Endothelial cell of umbilical vein (primary cell): ENCODE measurements at regions of chr13 and their contacts with region 1.

Region 1: DNA sequence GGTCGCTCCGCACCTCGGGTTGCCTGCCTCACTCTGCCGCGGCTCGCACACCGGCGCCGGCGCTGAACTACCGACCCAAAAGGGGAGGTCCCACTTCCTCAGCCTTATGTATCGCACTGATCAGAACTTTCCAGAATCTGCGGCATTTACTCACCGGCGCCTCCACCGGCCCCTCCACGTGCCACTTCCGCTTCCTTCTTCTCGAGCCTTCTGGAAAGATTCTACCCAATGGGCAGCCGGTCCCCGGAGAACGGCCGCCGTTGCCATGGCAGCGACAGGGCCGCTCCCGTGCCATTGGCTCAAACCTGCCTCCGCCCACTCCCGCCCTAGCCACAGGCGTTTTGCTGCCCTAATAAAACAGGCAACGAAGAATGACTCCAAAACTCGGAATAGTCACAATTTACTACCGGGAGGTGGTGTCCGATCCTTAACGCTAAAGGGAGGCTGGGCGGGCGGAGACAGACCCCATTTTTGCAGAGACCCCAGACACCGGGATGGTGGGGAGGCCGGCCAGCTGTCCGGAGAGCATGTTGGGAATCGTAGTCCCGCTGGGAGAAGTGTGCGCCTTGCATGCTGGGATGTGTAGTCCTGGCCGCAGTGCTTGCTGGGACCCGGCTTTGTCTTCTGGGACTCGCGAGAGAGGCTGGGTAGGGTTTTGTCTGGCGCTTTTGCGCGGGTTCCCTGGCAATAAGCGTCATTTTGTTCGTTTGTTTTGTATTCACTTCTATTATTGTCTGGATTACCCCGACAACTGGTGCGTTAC is at the start of gene HSPH1:
- DNase-seq: peak; percentile 98
- H3K4me3 ChIP-seq: peak within 1 kb of the TSS; percentile 88 to 99 (median 97)
- H3K27ac ChIP-seq: peak within 1 kb of the TSS; percentile 95
- H3K4me1 ChIP-seq: peaks cover 24% of the 10 kb centered on the region
- H3K27me3 ChIP-seq: no peaks in the 10 kb centered on the region
- CTCF ChIP-seq: peak in 1 of 2 donors; percentile 31
- POLR2A ChIP-seq: peak; percentile 81
- total RNA-seq, gene HSPH1: 98.1 and 124 TPM in 2 replicates

Region 2: DNA sequence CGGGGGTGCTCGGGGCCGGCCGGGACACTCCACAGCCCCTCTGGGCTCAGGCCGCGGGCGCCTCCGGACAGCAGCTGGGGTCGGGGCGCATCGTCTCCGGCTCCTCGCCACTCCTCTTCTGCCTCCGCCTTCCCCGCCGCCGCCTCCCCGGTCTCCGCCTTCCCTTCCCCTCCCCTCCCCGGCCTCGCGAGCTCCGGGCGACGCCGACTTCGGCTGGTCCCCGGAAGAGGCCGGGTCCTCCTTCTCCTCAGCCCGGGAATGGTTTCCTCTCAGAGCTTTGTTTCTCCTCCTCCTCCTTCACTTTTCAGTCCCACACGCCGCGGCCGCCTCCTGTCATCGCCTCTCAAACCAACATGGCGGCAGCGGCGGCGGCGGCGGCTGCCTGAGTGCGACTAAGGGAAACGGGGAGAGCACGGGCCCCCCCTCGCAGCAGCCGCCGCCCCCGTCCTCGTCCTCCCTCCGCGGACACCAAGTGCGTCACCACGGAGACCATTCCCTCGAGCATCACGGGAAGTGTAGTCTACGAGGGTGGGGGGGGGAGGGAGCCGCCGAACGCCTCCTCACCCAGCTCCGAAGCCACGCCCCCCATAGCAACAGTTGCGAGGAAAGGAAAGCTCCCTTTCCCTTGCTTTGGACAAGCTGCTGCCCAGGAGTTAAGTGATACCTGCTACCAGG is 1311.6 kb before region 1 on chr13 and contains the start of gene UBL3:
- CTCF ChIA-PET with region 1: no interaction called
- POLR2A ChIA-PET with region 1: no interaction called
- dilution Hi-C with region 1: no loop called
- intact Hi-C with region 1: loop called (anchors 10 kb)
- DNase-seq: peak; percentile 97
- H3K4me3 ChIP-seq: peak within 1 kb of the TSS; percentile 80 to 99 (median 98)
- H3K27ac ChIP-seq: peak within 1 kb of the TSS; percentile 83
- H3K4me1 ChIP-seq: peaks cover 22% of the 10 kb centered on the region
- H3K27me3 ChIP-seq: peaks cover 0 to 14% of the 10 kb centered on the region in 2 experiments
- CTCF ChIP-seq: no peak
- POLR2A ChIP-seq: peak; percentile 62
- total RNA-seq, gene UBL3: 11.1 and 11.8 TPM in 2 replicates

Region 3: DNA sequence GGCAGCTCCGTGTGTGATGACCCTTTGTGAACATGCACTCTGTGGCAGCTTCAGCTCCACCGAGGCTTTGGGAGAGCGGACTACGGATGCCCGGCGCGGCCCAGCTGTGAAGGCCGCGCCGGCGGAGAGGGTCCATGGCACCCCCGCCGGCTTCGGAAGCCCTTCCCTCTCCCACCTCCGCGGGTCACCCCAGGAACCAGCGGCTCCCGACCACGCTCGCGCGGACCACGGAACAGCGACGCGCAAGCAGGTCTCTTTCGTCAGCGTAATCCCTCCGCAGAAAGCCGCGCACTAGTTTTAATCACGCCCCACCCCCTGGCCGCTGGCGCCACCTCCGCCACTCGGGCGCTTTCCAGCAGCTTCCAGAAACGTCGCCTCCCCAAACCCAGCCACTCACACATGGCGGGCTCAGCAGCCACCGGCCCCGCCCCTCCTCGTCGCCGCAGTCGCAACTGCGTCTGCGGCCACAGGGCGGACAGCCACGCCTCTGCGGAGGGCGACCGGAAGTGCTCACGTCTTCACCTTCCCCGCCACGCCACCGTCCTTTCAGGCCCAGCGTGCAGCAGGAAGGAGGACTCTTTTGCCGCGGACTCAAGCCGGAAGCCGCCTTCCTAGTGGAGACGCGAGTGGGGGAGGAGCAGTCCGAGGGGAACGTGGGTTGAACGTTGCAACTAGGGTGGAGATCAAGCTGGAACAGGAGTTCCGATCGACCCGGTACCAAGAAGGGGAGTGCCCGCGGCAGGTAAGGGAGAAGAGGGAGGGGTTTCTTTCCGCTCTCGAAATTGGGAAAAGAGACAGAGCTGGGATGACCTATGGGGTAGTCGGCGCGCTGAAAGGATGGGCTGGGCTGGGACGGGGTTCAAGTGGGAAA is 544.5 kb before region 1 on chr13 and contains the start of gene USPL1:
- CTCF ChIA-PET with region 1: no interaction called
- POLR2A ChIA-PET with region 1: no interaction called
- dilution Hi-C with region 1: no loop called
- intact Hi-C with region 1: loop called (anchors 2 kb)
- DNase-seq: peak; percentile 100
- H3K4me3 ChIP-seq: peak within 1 kb of the TSS; percentile 83 to 95 (median 95)
- H3K27ac ChIP-seq: peak within 1 kb of the TSS; percentile 87
- H3K4me1 ChIP-seq: peaks cover 36% of the 10 kb centered on the region
- H3K27me3 ChIP-seq: no peaks in the 10 kb centered on the region
- CTCF ChIP-seq: peak in 1 of 2 donors; percentile 31
- POLR2A ChIP-seq: no peak
- total RNA-seq, gene USPL1: 18.8 and 21.0 TPM in 2 replicates

Region 4: DNA sequence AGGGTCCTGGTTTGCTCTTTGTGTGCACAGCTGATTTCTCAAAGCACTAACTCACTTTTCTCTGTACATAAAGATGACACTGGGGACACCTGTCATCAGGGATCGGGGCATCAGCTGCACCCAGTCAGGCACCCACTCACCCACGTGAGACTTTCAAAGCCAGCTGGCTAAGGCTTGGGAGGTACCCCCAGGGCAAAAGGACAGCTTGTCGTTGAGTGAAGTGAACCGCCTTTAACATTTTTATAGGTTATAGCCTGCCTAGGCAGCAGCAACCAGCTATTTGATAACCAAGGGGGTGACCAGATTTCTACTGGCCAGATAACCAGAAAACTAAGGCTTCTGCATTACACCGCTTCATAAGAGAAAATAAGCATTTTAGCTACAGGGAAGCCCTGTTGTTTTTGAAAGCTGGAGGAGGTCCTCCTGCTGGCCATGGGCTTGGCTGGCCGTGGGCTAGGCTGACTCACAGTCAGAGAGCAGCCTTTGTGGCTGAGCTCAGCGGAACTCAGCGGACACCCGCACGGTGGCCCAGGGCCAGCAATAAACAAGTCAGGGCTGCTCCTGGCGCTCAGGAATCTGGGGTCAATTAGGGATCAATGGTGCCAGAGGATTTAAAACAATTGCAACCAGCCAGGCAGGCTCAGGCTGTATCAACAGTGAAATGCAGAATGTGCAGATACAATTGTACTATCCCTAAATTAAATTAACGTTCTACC is 369.6 kb before region 1 on chr13:
- CTCF ChIA-PET with region 1: no interaction called
- POLR2A ChIA-PET with region 1: no interaction called
- dilution Hi-C with region 1: no loop called
- intact Hi-C with region 1: no loop called
- DNase-seq: peak; percentile 96
- H3K4me3 ChIP-seq: no peak overlapping the region
- H3K27ac ChIP-seq: peak overlapping the region; percentile 73
- H3K4me1 ChIP-seq: peaks cover 31% of the 10 kb centered on the region
- H3K27me3 ChIP-seq: no peaks in the 10 kb centered on the region
- CTCF ChIP-seq: peak; percentile 47 to 63
- POLR2A ChIP-seq: no peak

Region 5: DNA sequence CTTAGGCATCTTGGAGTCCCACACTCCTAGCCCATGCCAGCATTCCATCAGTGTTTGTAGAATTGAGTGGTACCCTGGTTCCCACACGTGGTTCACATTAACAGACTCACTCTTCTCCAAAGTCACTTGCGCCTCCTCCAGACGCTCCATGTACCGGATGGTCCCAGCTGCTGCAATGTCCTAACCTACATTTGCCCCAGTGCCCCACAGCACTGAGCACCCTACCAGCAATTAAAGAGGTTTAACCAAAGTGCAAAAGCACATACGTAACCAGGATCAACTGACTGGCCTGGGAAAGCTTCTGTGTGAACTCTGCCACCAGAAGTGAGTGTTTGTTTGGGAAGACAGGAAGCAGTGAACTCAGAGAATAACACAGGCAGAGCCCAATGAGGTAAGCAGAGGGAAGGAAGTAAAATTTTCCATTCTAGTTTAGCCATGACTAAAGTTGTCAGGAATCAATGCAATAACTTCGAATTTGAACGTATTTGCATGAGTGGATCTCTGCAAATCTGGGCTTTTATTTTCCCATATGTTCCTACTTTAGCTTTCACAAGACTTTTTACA is 263.2 kb before region 1 on chr13:
- CTCF ChIA-PET with region 1: no interaction called
- POLR2A ChIA-PET with region 1: no interaction called
- dilution Hi-C with region 1: no loop called
- intact Hi-C with region 1: loop called (anchors 2 kb)
- DNase-seq: peak; percentile 99
- H3K4me3 ChIP-seq: peak overlapping the region in 1 of 3 experiments; percentile 20
- H3K27ac ChIP-seq: peak overlapping the region; percentile 90
- H3K4me1 ChIP-seq: peaks cover 40% of the 10 kb centered on the region
- H3K27me3 ChIP-seq: no peaks in the 10 kb centered on the region
- CTCF ChIP-seq: no peak
- POLR2A ChIP-seq: no peak

Region 6: GRCh38 chr13:31110617-31111016 is 51.4 kb before region 1 on chr13:
- CTCF ChIA-PET with region 1: no interaction called
- POLR2A ChIA-PET with region 1: no interaction called
- dilution Hi-C with region 1: no loop called
- intact Hi-C with region 1: no loop called
- DNase-seq: no peak
- H3K4me3 ChIP-seq: no peak overlapping the region
- H3K27ac ChIP-seq: no peak overlapping the region
- H3K4me1 ChIP-seq: no peaks in the 10 kb centered on the region
- H3K27me3 ChIP-seq: peaks cover 10 to 32% of the 10 kb centered on the region in 2 experiments
- CTCF ChIP-seq: no peak
- POLR2A ChIP-seq: no peak

Region 7: DNA sequence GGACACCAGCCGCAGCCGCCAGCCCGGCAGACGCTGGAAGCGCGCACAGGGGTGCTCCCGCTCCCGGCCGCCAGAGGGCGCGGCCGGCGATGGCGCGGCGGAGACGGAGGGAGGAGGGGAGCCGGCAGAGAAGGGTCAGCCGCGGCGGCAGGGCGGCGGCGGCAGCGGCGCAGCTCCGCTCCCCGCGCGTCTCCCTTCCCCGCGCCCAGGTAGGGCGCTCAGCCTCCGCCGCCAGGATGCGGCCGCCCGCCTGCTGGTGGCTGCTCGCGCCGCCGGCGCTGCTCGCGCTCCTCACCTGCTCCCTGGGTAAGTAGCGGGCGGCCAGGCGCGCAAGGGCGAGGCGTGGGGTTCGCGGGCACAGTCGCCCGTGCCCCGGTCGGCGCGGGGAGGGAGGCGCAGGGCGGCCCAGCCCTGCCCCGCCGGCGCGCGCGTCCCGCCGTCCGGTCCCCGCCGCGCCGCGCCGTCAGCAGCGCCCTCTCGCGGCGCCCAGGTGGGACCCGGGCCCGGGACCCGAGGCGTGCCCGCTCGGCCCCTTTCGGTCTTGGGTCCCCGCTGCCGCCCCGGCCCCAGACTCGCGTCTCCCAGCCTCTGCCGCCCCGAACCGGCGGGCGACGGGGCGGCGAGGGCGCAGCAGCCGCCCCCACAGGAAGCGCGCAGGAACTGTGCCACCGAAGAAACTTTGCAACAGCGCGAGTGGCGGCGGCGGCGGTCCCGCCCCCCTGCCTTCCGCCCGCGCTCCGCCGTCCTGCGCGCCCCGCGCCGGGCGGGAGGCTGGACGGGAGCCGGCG is 38.0 kb after region 1 on chr13 and contains the start of gene B3GLCT:
- CTCF ChIA-PET with region 1: interaction called, 4 read pairs
- POLR2A ChIA-PET with region 1: no interaction called
- dilution Hi-C with region 1: no loop called
- intact Hi-C with region 1: loop called (anchors 1 kb)
- DNase-seq: peak; percentile 75
- H3K4me3 ChIP-seq: peak within 1 kb of the TSS; percentile 66 to 87 (median 83)
- H3K27ac ChIP-seq: peak within 1 kb of the TSS; percentile 83
- H3K4me1 ChIP-seq: peaks cover 17% of the 10 kb centered on the region
- H3K27me3 ChIP-seq: no peaks in the 10 kb centered on the region
- CTCF ChIP-seq: peak; percentile 84 to 85
- POLR2A ChIP-seq: peak; percentile 39
- total RNA-seq, gene B3GLCT: 13.9 and 14.6 TPM in 2 replicates